Mammary epithelial cell (primary cell): ENCODE measurements at regions of chr7 and their contacts with region 1.

Region 1: GRCh38 chr7:11394438-11394837 is 420.8 kb downstream of the PHF14 start:
- DNase-seq: no peak
- H3K4me3 ChIP-seq: no peak overlapping the region
- H3K27ac ChIP-seq: no peak overlapping the region
- H3K4me1 ChIP-seq: no peaks in the 10 kb centered on the region
- H3K27me3 ChIP-seq: no peaks in the 10 kb centered on the region
- CTCF ChIP-seq: no peak

Region 2: DNA sequence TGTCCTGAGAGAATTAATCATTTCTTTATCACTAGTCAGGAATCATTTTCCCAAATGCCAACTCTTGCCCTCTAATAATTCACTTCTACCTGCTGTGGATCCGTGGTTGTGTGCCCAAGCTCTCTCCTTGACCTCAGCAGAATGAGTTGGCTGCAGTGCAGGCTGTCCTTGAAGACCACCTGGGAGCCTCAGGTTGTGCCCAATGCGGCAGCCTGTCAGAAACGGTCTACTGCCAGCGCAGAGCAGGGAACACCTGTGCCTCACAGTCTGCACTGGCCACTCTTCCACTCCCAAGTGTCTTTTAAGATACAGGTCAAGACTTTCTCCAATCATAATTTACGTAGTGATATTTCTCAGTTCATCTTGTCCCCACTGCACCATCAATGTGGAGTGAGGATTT is 666.8 kb before region 1 on chr7:
- CTCF ChIA-PET with region 1: no interaction called
- dilution Hi-C with region 1: no loop called
- in situ Hi-C with region 1: no loop called
- intact Hi-C with region 1: no loop called
- DNase-seq: no peak
- H3K4me3 ChIP-seq: no peak overlapping the region
- H3K27ac ChIP-seq: no peak overlapping the region
- H3K4me1 ChIP-seq: no peaks in the 10 kb centered on the region
- H3K27me3 ChIP-seq: no peaks in the 10 kb centered on the region
- CTCF ChIP-seq: no peak

Region 3: DNA sequence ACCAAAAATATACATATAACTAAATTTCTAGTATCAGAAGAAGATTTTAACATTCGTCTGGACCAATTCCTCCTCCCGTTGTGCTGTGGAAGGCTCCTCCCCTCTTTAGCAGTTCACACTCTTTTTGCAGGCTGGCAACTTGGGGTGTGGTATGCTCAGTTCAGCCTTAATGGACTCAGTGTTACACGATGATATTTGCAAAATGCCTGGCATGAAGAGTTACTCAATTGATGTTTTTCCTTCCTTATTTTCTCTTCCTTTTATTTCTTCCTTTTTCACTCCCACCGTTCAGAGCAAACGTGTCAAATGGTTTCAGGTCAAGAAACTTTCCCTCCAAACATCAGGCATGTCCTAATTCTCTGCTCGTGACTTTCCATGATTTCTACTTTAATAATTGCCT is 172.5 kb before region 1 on chr7:
- CTCF ChIA-PET with region 1: no interaction called
- dilution Hi-C with region 1: no loop called
- in situ Hi-C with region 1: no loop called
- intact Hi-C with region 1: no loop called
- DNase-seq: no peak
- H3K4me3 ChIP-seq: no peak overlapping the region
- H3K27ac ChIP-seq: no peak overlapping the region
- H3K4me1 ChIP-seq: no peaks in the 10 kb centered on the region
- H3K27me3 ChIP-seq: no peaks in the 10 kb centered on the region
- CTCF ChIP-seq: no peak

Region 4: DNA sequence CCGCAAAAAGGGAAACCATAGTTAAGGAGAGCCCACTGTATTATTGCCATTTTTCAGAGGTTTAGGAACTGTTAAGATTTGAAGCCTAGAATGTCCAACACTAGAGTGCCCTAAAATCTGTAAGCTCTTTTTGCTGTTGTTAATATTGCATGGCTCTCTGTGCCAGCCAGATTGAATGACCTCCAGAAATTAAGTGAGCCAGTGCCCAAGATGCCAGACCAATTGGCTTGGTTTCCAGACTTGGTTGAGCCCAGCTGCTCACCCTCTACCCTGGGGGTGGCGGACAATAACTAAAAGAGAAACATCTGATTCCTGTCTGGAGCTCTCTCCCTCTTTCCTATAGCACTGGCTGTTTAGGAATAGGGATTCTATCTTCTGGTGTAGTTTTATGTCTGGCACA is 80.6 kb before region 1 on chr7:
- CTCF ChIA-PET with region 1: no interaction called
- dilution Hi-C with region 1: loop called (anchors 5 kb)
- in situ Hi-C with region 1: no loop called
- intact Hi-C with region 1: no loop called
- DNase-seq: no peak
- H3K4me3 ChIP-seq: no peak overlapping the region
- H3K27ac ChIP-seq: no peak overlapping the region
- H3K4me1 ChIP-seq: peaks cover under 1% of the 10 kb centered on the region
- H3K27me3 ChIP-seq: no peaks in the 10 kb centered on the region
- CTCF ChIP-seq: no peak